Posterior vena cava (tissue), 2 donors: ENCODE measurements at regions of chr10 and their contacts with region 1.

Region 1: GRCh38 chr10:29877793-29878491 is 181.4 kb downstream of the JCAD start:
- DNase-seq: peak; percentile 84

Region 2: DNA sequence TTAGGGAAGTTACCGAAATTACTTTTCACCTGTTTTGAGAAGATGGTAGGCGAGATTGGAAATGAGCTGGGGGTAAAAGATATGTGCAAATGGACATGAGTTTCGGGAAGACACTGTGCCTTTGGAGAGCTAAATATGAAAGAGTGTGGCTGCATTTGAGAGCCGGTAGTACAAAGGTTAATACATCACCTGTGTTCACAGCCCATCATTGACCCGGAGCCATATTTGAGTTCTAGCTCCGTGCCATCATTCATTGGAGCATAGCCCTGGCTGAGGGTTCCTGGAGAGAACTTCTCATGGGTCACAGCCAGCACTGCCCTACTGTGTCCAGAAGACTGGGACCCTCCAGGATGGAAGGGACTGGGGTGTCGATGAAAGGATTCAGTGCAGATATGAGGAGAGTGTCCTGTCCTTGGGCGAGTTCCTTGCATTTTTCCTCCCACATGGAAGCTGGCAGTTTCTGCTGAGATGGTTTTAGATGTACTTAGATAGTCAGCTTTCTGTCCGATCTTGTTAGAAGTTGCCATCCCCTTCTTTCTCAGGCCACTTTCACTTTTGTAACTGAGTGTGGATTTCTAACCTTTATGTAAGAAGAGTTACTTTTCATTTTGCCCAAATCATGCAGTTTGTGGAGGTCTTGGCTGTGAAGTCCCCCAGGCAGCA is 42.6 kb after region 1 on chr10:
- intact Hi-C with region 1: loop called in 1 of 2 experiments (anchors 1 kb)
- DNase-seq: no peak